Activated T-helper 2 cell treated with anti-CD3 and anti-CD28 coated beads, Interferon-gamma antibody, Interleukin-2, Interleukin-4, amounts not matched to agents 10 μg/mL and 5 μg/mL and 100 μg/mL, durations not matched to agents 14 hours and 24 hours and 36 hours (primary cell): ENCODE measurements at regions of chr3 and their contacts with region 1.

Region 1: DNA sequence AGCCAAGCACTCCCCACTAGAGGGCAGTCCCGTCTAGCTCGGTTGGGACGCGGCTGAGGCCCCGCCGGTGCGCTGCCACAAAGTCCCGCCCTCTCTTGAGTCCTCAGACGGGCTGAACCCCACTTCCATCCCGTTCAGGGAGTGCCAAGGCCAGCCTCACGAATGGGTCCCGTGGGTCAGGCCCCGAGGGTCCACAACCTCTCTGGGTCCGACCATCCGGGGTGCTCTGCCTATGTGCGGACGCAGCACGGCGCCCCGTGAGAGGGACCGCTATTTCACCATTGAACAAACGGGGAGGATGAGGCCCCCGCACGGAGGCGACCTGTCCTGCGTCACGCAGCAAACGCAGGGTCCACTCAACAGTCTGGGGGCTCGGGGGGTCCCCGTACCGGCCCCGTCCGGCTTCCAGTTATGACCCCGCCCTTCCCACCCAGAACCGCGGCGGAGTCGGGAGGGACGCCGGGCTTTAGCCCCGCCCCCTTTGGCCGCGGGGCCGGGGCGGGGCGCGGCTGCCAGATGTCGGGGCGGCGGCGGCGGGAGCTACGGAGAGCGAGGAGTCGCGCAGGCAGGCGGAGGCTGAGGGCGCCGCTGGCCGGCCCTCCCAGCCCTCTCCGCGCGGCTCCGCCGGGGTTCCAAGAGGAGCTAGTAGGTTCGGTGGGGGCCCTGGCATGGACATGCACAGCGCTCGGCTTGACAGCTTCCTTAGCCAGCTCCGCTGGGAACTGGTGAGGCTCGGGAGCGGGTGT is at the start of gene INKA1:
- DNase-seq: peak; percentile 83
- H3K4me3 Mint-ChIP-seq: peak within 1 kb of the TSS; percentile 83
- H3K27ac Mint-ChIP-seq: peak within 1 kb of the TSS; percentile 75
- H3K4me1 Mint-ChIP-seq: peaks cover 22% of the 10 kb centered on the region
- H3K27me3 Mint-ChIP-seq: peaks cover 17% of the 10 kb centered on the region
- total RNA-seq, gene INKA1: 1.2 and 2.3 TPM in 2 replicates

Region 2: GRCh38 chr3:49647741-49648140 is 155.2 kb before region 1 on chr3:
- intact Hi-C with region 1: no loop called
- DNase-seq: no peak
- H3K4me3 Mint-ChIP-seq: no peak overlapping the region
- H3K27ac Mint-ChIP-seq: no peak overlapping the region
- H3K4me1 Mint-ChIP-seq: no peaks in the 10 kb centered on the region
- H3K27me3 Mint-ChIP-seq: no peaks in the 10 kb centered on the region

Region 3: DNA sequence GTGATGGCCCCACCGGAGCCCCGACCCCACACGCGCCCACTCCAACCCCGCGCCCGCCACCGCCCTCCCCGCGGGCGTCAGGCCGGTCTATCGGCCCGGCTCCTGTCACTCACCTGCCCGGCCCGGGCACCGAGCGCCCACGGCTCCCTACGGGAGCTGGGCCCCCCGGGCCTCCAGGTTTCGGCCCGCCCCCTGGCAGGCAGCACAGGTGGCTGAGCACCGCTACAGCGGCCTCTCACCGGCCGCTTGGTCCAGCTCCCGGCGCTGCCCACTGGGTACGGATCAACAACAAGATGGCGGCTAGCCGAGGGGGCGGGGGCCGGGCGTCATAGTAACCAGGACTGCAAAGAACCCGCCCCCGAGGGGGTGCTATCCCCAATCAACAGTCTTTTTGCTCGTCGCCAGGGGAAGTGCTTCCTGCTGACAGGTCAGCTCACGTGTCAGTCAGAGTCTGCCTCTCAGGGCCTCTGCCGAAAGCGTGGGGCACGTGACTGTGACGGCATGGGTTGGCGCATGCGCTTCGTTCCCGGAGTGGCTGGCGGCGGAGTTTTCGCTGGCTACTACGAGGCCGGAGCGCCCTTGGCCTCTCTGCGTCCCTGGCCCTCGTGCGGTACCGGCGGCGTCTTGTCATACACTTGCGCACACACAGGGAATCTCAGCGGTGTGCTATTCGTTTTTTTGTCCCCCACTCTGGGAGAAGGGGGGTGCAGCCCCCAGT is 16.5 kb before region 1 on chr3 and contains the start of gene IP6K1:
- intact Hi-C with region 1: loop called (anchors 1 kb)
- DNase-seq: peak; percentile 100
- H3K4me3 Mint-ChIP-seq: peak within 1 kb of the TSS; percentile 90
- H3K27ac Mint-ChIP-seq: peak within 1 kb of the TSS; percentile 95
- H3K4me1 Mint-ChIP-seq: peaks cover 18% of the 10 kb centered on the region
- H3K27me3 Mint-ChIP-seq: no peaks in the 10 kb centered on the region
- total RNA-seq, gene IP6K1: 36.9 and 40.7 TPM in 2 replicates

Region 4: DNA sequence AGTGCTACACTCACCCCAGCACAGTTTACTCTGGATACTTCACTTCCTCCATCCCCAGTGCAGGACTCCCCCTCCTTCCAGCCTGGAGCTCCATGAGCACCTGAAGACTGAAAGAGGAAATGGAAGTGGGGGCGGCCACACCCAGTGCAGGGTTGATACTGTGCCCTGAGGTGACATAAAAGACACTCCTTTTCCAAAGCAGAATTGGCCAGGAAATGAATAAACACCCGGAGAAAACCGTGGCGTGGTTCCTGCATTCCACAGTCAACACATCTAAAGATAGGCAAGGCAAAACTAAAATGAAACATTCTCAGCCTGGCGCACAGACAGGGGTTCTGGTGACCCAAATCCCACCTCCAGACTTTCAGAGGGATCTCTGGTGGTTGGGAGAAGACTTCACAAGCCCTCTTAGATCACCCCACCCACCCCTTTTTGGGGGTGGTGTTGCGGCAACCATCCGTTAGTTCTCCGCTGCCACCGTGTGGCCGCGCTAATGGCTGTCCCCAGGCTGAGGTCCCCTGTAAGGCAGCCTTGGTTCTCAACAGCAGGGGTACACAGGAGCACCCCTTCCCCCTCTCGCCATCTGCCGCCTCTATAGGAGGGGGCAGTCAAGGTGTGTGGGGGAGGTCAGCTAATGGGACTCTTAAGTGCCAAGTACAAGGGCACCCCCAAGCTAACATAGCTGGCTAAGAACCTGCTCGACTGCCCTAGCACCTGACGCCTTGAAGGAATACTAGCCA is 103.3 kb after region 1 on chr3:
- intact Hi-C with region 1: loop called (anchors 2 kb)
- DNase-seq: peak; percentile 37
- H3K4me3 Mint-ChIP-seq: peak overlapping the region; percentile 54
- H3K27ac Mint-ChIP-seq: peak overlapping the region; percentile 44
- H3K4me1 Mint-ChIP-seq: peaks cover 25% of the 10 kb centered on the region
- H3K27me3 Mint-ChIP-seq: no peaks in the 10 kb centered on the region

Region 5: GRCh38 chr3:49939858-49940666 is 137.2 kb after region 1 on chr3 and contains the start of gene RBM6:
- intact Hi-C with region 1: no loop called
- DNase-seq: peak; percentile 95
- H3K4me3 Mint-ChIP-seq: peak within 1 kb of the TSS; percentile 91
- H3K27ac Mint-ChIP-seq: peak within 1 kb of the TSS; percentile 92
- H3K4me1 Mint-ChIP-seq: peaks cover 16% of the 10 kb centered on the region
- H3K27me3 Mint-ChIP-seq: no peaks in the 10 kb centered on the region
- total RNA-seq, gene RBM6: 99.2 and 104 TPM in 2 replicates